Activated T-helper 1 cell treated with anti-CD3 and anti-CD28 coated beads, Interleukin-12 subunit alpha, Interleukin-12 subunit beta, Interleukin-2, Interleukin-4 antibody, amounts not matched to agents 30 ng/mL and 10 ng/mL and 1 ng/mL, durations not matched to agents 14 hours and 24 hours and 36 hours (primary cell): ENCODE measurements at regions of chr19 and their contacts with region 1.

Region 1: DNA sequence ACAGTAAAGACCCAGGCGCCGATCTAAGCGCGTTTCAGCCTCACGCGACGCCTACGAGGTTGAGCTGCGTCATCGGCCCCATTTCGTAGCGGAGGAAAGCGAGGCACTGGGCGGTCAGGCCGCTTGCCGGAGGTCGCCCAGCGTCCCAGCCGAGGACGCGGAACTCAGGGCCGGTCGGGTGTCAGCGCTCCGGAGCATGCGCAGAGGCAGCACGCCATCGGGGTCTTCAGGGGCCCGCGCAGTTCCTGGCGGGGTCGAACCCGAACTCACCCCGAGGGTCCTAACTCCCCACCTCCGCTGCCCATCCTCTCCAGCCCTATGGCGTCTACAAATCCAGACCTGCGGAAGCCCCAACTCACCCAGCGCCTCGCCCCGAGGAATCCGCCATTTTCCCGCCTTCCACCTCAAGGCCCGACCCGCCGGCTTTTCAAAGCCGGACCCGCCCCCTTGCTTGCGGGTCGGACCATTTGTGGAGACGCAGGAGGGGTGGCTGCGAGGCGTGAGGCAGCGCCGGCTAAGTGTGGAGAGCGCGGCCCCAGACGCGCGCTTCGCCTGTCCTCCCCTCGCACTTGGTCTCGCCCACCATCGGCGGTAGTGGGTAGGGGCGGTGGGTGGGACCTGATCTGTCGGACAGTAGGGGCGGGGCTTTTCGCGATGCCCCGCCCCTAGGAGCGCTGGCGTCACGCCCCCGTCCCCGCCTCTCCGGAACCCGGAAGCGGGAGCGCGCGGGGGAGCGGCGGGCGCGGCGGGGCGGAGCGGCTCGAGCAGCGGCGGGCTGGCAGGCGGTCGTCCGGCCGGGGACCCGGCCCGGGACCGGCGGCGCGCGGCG is at the starts of genes HAUS8 and MYO9B:
- DNase-seq: peak; percentile 99
- H3K4me3 Mint-ChIP-seq: peak within 1 kb of the TSS; percentile 99
- H3K27ac Mint-ChIP-seq: peak within 1 kb of the TSS; percentile 97
- H3K4me1 Mint-ChIP-seq: peaks cover 66% of the 10 kb centered on the region
- H3K27me3 Mint-ChIP-seq: no peaks in the 10 kb centered on the region
- total RNA-seq, gene HAUS8: 32.8 and 34.9 TPM in 2 replicates
- total RNA-seq, gene MYO9B: 134 and 137 TPM in 2 replicates

Region 2: GRCh38 chr19:16628183-16628983 is 446.9 kb before region 1 on chr19 and contains the start of gene MED26:
- intact Hi-C with region 1: loop called (anchors 2 kb)
- DNase-seq: peak; percentile 91
- H3K4me3 Mint-ChIP-seq: peak within 1 kb of the TSS; percentile 97
- H3K27ac Mint-ChIP-seq: peak within 1 kb of the TSS; percentile 99
- H3K4me1 Mint-ChIP-seq: peaks cover 47% of the 10 kb centered on the region
- H3K27me3 Mint-ChIP-seq: no peaks in the 10 kb centered on the region
- total RNA-seq, gene MED26: 14.0 and 14.9 TPM in 2 replicates

Region 3: GRCh38 chr19:16829010-16829821 is 246.0 kb before region 1 on chr19 and contains the start of gene SIN3B:
- intact Hi-C with region 1: loop called (anchors 1 kb)
- DNase-seq: peak; percentile 88
- H3K4me3 Mint-ChIP-seq: peak within 1 kb of the TSS; percentile 88
- H3K27ac Mint-ChIP-seq: peak within 1 kb of the TSS; percentile 78
- H3K4me1 Mint-ChIP-seq: peaks cover 37% of the 10 kb centered on the region
- H3K27me3 Mint-ChIP-seq: peaks cover 26% of the 10 kb centered on the region
- total RNA-seq, gene SIN3B: 44.6 and 45.1 TPM in 2 replicates

Region 4: DNA sequence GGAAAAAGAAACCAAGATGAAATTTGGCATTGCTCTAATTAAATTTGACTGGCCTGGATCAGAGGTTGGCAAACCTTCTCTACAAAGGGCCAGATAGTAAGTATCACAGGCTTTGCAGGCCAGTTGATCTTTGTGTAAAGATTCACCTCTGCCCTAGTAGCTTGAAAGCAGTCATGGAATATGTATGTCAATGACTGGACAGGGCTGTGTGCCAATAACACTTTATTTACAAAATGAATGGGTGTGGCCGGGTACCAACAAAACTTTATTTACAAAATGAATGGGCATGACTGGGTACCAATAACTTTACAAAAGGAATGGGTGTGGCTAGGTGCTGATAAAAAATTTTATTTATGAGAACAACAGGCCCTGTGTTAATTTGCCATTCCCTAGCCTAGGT is 226.1 kb before region 1 on chr19:
- intact Hi-C with region 1: no loop called
- DNase-seq: no peak
- H3K4me3 Mint-ChIP-seq: no peak overlapping the region
- H3K27ac Mint-ChIP-seq: no peak overlapping the region
- H3K4me1 Mint-ChIP-seq: no peaks in the 10 kb centered on the region
- H3K27me3 Mint-ChIP-seq: no peaks in the 10 kb centered on the region

Region 5: GRCh38 chr19:17183858-17184321 is 108.6 kb after region 1 on chr19:
- intact Hi-C with region 1: loop called (anchors 2 kb)
- DNase-seq: peak; percentile 19
- H3K4me3 Mint-ChIP-seq: peak overlapping the region; percentile 82
- H3K27ac Mint-ChIP-seq: peak overlapping the region; percentile 93
- H3K4me1 Mint-ChIP-seq: peaks cover 20% of the 10 kb centered on the region
- H3K27me3 Mint-ChIP-seq: no peaks in the 10 kb centered on the region

Region 6: GRCh38 chr19:17226002-17226933 is 151.0 kb after region 1 on chr19 and contains the start of gene OCEL1:
- intact Hi-C with region 1: loop called (anchors 1 kb)
- DNase-seq: peak; percentile 95
- H3K4me3 Mint-ChIP-seq: peak within 1 kb of the TSS; percentile 89
- H3K27ac Mint-ChIP-seq: peak within 1 kb of the TSS; percentile 98
- H3K4me1 Mint-ChIP-seq: peaks cover 4% of the 10 kb centered on the region
- H3K27me3 Mint-ChIP-seq: no peaks in the 10 kb centered on the region
- total RNA-seq, gene OCEL1: 17.0 and 19.6 TPM in 2 replicates

Region 7: GRCh38 chr19:18152444-18152816 is 1077.2 kb after region 1 on chr19:
- intact Hi-C with region 1: loop called (anchors 5 kb)
- DNase-seq: peak; percentile 95
- H3K4me3 Mint-ChIP-seq: peak overlapping the region; percentile 84
- H3K27ac Mint-ChIP-seq: peak overlapping the region; percentile 96
- H3K4me1 Mint-ChIP-seq: peaks cover 23% of the 10 kb centered on the region
- H3K27me3 Mint-ChIP-seq: peaks cover 3% of the 10 kb centered on the region